Ascending aorta (tissue), 2 donors: ENCODE measurements at regions of chr3 and their contacts with region 1.

Region 1: DNA sequence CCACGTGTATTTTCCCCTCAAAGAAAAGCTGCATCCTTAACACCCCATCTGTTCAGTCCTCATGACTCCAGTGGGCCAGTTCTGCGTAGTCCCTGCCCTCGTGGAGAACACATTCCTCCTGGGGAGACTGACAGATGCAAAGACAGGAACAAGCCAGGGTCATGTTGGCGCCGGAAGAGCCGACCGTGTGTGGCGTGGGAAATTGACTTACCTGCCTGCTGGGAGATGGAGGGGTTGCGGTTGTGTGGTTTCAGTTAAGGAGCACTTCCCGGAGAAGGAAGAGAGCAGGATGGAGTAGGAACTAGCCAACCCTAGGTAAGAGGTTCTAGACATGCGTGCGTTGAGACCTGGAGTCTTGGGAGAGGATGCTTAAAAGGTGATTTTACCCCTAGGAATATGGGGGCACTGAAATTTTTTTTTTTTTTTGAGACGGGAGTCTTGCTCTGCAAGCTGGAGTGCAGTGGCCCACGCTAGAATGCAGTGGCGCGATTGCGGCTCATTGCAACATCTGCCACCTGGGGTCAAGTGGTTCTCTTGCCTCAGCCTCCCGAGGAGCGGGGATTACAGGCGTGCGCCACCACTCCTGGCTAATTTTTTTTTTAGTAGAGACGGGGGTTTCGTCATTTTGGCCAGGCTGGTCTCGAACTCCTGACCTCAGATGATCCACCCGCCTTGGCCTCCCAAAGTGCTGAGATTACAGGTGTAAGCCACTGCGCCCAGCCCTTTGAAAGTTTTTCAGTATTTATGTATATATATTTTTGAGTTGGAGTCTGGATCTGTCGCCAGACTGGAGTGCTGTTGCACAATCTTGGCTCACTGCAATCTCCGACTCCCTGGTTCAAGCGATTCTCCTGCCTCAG is 1.4 kb downstream of the VHL start:
- DNase-seq: no peak
- H3K4me3 ChIP-seq: peak overlapping the region; percentile 65 to 91
- H3K27ac ChIP-seq: peak overlapping the region; percentile 90 to 96
- H3K4me1 ChIP-seq: peaks cover 7 to 22% of the 10 kb centered on the region in 2 donors
- H3K27me3 ChIP-seq: no peaks in the 10 kb centered on the region
- CTCF ChIP-seq: no peak

Region 2: DNA sequence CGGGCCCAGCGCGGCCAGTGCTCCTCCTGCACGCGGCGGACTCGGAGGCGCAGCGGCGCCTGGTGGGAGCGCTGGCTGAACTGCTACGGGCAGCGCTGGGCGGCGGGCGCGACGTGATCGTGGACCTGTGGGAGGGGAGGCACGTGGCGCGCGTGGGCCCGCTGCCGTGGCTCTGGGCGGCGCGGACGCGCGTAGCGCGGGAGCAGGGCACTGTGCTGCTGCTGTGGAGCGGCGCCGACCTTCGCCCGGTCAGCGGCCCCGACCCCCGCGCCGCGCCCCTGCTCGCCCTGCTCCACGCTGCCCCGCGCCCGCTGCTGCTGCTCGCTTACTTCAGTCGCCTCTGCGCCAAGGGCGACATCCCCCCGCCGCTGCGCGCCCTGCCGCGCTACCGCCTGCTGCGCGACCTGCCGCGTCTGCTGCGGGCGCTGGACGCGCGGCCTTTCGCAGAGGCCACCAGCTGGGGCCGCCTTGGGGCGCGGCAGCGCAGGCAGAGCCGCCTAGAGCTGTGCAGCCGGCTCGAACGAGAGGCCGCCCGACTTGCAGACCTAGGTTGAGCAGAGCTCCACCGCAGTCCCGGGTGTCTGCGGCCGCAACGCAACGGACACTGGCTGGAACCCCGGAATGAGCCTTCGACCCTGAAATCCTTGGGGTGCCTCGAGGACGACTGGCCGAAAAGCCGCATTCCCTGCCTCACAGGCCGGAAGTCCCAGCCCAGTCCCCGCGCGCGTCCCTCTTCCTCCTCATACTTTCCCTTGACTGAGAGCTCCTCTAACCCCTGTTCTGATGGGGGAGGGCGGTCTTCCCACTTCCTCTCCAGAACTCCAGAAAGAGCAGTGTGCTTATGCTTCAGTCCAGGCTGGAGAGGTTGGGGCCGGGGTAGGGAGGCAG is 227.4 kb before region 1 on chr3:
- intact Hi-C with region 1: no loop called
- DNase-seq: peak in 1 of 2 donors; percentile 85
- H3K4me3 ChIP-seq: peak overlapping the region; percentile 62 to 89
- H3K27ac ChIP-seq: peak overlapping the region; percentile 79 to 86
- H3K4me1 ChIP-seq: peaks cover 22 to 32% of the 10 kb centered on the region in 2 donors
- H3K27me3 ChIP-seq: no peaks in the 10 kb centered on the region
- CTCF ChIP-seq: peak in 2 of 3 experiments; percentile 32 to 56

Region 3: GRCh38 chr3:10115326-10116137 is 27.4 kb before region 1 on chr3 and contains the start of gene BRK1:
- intact Hi-C with region 1: loop called (anchors 2 kb)
- DNase-seq: peak; percentile 87 to 98
- H3K4me3 ChIP-seq: peak within 1 kb of the TSS; percentile 75 to 76
- H3K27ac ChIP-seq: peak within 1 kb of the TSS; percentile 55 to 74
- H3K4me1 ChIP-seq: peaks cover 6 to 11% of the 10 kb centered on the region in 2 donors
- H3K27me3 ChIP-seq: no peaks in the 10 kb centered on the region
- CTCF ChIP-seq: no peak
- total RNA-seq, gene BRK1: 87.3 TPM

Region 4: GRCh38 chr3:10192953-10193691 is 50.2 kb after region 1 on chr3:
- intact Hi-C with region 1: no loop called
- DNase-seq: peak in 1 of 2 donors; percentile 82
- H3K4me3 ChIP-seq: no peak overlapping the region
- H3K27ac ChIP-seq: peak overlapping the region; percentile 84 to 94
- H3K4me1 ChIP-seq: peaks cover 37 to 74% of the 10 kb centered on the region in 2 donors
- H3K27me3 ChIP-seq: no peaks in the 10 kb centered on the region
- CTCF ChIP-seq: peak in 2 of 3 experiments; percentile 34 to 39